BJ (cell line): ENCODE measurements at regions of chr5 and their contacts with region 1.

Region 1: GRCh38 chr5:431001-431710 is 11.8 kb upstream of the EXOC3 start:
- DNase-seq: no peak
- H3K4me3 ChIP-seq: no peak overlapping the region
- H3K27me3 ChIP-seq: no peaks in the 10 kb centered on the region
- CTCF ChIP-seq: peak; percentile 74

Region 2: GRCh38 chr5:418681-419121 is 12.5 kb before region 1 on chr5:
- CTCF ChIA-PET with region 1: interaction called, 11 read pairs
- POLR2A ChIA-PET with region 1: no interaction called
- DNase-seq: no peak
- H3K4me3 ChIP-seq: no peak overlapping the region
- H3K27me3 ChIP-seq: no peaks in the 10 kb centered on the region
- CTCF ChIP-seq: no peak

Region 3: GRCh38 chr5:683551-684481 is 252.7 kb after region 1 on chr5:
- CTCF ChIA-PET with region 1: no interaction called
- POLR2A ChIA-PET with region 1: no interaction called
- DNase-seq: no peak
- H3K4me3 ChIP-seq: no peak overlapping the region
- H3K27me3 ChIP-seq: no peaks in the 10 kb centered on the region; the same call in 1 of the 2 replicates
- CTCF ChIP-seq: no peak